Upper lobe of right lung (tissue), 1 donor: ENCODE measurements at regions of chr5 and their contacts with region 1.

Region 1: DNA sequence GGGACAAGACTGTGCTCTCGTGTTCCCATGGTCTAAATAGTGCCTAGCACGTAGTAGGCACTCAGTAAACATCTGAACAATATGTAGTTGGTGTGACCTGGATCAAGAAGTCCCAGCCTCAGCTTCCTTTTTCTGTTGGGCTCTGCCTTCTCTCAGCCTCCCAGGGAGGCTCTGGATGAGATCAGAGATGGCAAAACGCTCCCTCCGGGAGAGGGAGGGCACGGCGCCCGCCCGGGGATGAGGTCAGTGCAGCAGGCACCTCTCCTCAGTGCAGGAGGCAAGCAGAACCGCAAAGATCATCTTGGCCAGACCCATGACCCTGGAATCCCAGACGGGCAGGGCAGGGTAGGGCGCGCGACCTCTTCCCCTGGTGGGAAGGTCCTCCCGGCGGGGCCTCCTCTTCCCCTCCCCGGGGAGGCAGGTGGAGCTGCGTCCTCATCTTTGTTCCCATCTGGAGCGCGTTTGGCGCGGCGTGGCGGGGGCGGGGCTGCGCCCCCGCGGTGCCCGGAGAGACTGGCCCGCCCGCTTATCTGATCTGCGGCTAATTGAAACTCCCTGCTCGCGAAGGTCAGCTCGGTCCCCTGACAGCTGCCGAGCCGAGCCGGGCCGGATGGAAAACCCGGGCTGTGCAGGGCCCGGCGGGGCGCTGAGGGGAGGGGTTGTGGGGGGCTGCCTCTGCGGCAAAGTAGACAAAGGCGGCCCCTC is 60.9 kb downstream of the CXXC5 start:
- DNase-seq: peak; percentile 71
- ATAC-seq: peak; percentile 62
- H3K4me3 ChIP-seq: peak overlapping the region; percentile 51
- H3K27ac ChIP-seq: peak overlapping the region; percentile 65
- H3K4me1 ChIP-seq: peaks cover 30% of the 10 kb centered on the region
- H3K27me3 ChIP-seq: peaks cover 17% of the 10 kb centered on the region
- CTCF ChIP-seq: no peak

Region 2: GRCh38 chr5:139593716-139594319 is 115.2 kb before region 1 on chr5:
- intact Hi-C with region 1: no loop called
- DNase-seq: no peak
- ATAC-seq: no peak
- H3K4me3 ChIP-seq: no peak overlapping the region
- H3K27ac ChIP-seq: no peak overlapping the region
- H3K4me1 ChIP-seq: peaks cover 14% of the 10 kb centered on the region
- H3K27me3 ChIP-seq: no peaks in the 10 kb centered on the region
- CTCF ChIP-seq: no peak

Region 3: GRCh38 chr5:139765409-139766217 is 56.6 kb after region 1 on chr5:
- intact Hi-C with region 1: loop called (anchors 10 kb)
- DNase-seq: peak; percentile 92
- ATAC-seq: peak; percentile 95
- H3K4me3 ChIP-seq: peak overlapping the region; percentile 64
- H3K27ac ChIP-seq: no peak overlapping the region
- H3K4me1 ChIP-seq: peaks cover 5% of the 10 kb centered on the region
- H3K27me3 ChIP-seq: peaks cover 31% of the 10 kb centered on the region
- CTCF ChIP-seq: peak; percentile 96